Cardiac septum (tissue), 1 donor: ENCODE measurements at regions of chrX and their contacts with region 1.

Region 1: DNA sequence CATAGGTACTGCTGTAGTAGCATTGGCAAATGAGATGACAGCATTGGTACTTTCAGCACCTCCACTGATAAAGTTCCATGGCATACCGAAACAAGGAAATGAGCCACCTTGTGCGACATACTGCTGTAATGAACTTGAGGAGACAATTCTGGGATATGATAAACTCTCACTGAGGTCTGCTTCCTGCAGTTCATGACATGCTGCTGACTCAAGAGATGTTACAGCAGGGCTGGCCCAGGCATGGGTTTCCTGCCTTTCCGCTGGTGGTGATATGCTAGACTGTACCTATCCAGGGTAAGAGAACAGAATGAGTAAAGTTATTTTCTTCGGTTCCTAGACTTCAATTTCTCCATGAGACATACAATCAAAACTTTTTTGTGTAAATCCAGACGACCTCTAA is 17.1 kb downstream of the BEND2 start:
- DNase-seq: no peak

Region 2: DNA sequence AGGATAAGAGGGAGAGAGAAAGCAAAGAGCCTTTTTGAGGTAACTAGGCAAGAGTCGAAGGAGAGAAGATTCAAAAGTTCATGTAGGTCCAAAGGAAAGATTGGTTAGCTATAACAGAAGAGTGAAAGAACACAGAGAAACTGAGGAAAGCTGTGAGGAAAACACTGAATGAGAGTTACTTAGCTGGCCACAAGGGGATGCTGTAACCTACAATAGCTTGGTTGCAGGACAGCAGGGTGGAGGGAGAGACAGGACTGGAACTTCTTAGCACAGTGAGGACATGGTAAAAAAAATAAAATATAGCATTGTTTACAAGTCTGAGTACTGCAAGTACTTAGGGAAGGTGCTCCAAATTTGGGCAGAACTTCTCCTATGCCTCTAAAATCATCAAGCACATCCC is 390.9 kb before region 1 on chrX:
- intact Hi-C with region 1: loop called (anchors 10 kb)
- DNase-seq: no peak

Region 3: DNA sequence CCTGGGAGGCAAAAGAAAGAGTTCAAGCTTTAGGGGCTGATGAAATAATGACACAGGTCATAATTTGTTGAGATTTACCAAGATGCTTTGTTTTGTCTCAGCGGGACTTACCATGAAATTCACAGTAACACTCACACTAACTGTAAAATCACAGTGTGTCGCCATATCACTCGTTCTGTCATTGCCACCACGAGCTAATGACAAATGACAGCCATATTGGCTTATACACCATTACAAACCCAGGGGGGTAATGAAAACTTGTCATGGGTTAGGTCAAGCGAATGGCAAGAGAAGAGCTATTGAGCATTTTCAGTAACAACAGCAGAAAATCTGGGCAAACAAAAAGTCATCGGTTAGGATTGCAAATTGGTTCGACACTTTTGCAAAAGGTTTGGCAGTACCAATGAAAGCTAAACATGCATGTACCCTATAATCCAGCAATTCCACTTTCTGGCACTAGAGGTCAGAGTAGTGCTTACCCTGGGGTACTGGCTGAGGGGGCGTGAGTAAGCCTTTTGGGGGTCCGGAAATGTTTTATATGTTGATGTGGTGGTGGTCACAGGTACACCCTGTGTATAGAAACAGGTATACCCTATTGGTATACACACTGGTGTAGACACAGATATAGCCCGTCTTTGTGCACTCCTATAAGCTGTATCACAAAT is 258.7 kb before region 1 on chrX:
- intact Hi-C with region 1: loop called (anchors 10 kb)
- DNase-seq: no peak